Panc1 (cell line): ENCODE measurements at regions of chr10 and their contacts with region 1.

Region 1: GRCh38 chr10:121559326-121560026 is 38.8 kb downstream of the FGFR2 start:
- DNase-seq: no peak
- ATAC-seq: peak; percentile 48; the same call in 1 of the 2 replicates
- H3K4me3 ChIP-seq: no peak overlapping the region
- H3K27ac ChIP-seq: no peak overlapping the region
- H3K4me1 ChIP-seq: no peaks in the 10 kb centered on the region; the same call in 1 of the 2 replicates
- H3K27me3 ChIP-seq: no peaks in the 10 kb centered on the region
- CTCF ChIP-seq: no peak

Region 2: GRCh38 chr10:121033366-121033765 is 526.1 kb before region 1 on chr10:
- CTCF ChIA-PET with region 1: no interaction called
- POLR2A ChIA-PET with region 1: interaction called, 17 read pairs
- in situ Hi-C with region 1: no loop called
- intact Hi-C with region 1: no loop called
- DNase-seq: no peak
- ATAC-seq: no peak
- H3K4me3 ChIP-seq: no peak overlapping the region
- H3K27ac ChIP-seq: no peak overlapping the region
- H3K4me1 ChIP-seq: no peaks in the 10 kb centered on the region
- H3K27me3 ChIP-seq: peaks cover 5% of the 10 kb centered on the region; the same call in 1 of the 2 replicates
- CTCF ChIP-seq: no peak

Region 3: GRCh38 chr10:121490871-121491519 is 68.5 kb before region 1 on chr10:
- CTCF ChIA-PET with region 1: no interaction called
- POLR2A ChIA-PET with region 1: no interaction called
- in situ Hi-C with region 1: no loop called
- intact Hi-C with region 1: no loop called
- DNase-seq: no peak
- ATAC-seq: peak; percentile 38; the same call in 1 of the 2 replicates
- H3K4me3 ChIP-seq: no peak overlapping the region
- H3K27ac ChIP-seq: no peak overlapping the region
- H3K4me1 ChIP-seq: 0 out of 2 replicates have a peak, but pooled peaks cover under 1% of the 10 kb centered on the region
- H3K27me3 ChIP-seq: no peaks in the 10 kb centered on the region
- CTCF ChIP-seq: no peak

Region 4: DNA sequence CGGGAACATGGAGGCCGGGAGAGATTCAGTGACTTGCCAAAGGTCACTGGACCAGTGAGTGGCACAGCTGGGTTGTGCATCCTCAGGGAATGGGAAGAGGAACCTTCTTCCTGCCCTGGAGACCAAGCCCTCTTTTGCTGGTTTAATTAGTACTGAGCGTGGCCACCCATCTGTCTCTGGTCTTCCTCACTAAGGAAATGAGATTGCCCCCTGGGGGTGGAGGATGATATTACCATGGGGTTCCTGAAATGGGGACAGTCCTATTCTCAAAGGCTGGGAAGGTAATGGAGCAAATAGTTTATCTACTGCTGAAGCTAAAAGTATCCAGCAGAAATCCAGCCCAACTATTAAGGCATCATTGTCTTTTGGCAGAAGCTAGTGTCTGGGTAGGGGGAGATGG is 137.4 kb after region 1 on chr10:
- CTCF ChIA-PET with region 1: no interaction called
- POLR2A ChIA-PET with region 1: no interaction called
- in situ Hi-C with region 1: no loop called
- intact Hi-C with region 1: no loop called
- DNase-seq: no peak
- ATAC-seq: no peak
- H3K4me3 ChIP-seq: no peak overlapping the region
- H3K27ac ChIP-seq: no peak overlapping the region
- H3K4me1 ChIP-seq: no peaks in the 10 kb centered on the region
- H3K27me3 ChIP-seq: peaks cover 16% of the 10 kb centered on the region
- CTCF ChIP-seq: peak; percentile 71

Region 5: DNA sequence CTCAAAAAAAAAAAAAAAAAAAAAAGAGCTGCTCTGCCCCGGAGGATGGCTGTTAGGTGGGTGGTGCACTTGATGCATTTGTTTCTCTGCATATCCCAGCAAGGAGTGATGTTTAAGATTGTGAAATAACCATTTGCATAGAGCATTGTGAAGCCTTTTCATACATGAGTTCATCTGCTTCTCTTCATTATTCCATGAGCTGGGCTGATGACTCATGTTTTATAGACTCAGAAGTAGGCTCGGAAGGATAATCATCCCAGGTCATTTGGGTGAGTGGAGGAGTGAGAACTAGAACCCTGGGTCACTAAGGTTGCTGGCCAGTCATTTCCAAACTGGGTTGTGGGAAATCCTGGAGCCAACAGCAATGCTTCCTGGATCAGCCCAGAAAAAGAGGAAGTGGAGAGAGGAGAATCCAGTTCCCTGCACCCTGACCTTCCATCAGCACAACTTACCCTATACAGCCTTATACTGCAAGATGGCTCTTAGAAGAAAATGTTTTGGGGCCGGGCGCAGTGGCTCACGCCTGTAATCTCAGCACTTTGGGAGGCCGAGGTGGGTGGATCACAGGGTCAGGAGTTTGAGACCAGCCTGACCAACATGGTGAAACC is 474.8 kb after region 1 on chr10:
- CTCF ChIA-PET with region 1: no interaction called
- POLR2A ChIA-PET with region 1: interaction called, 12 read pairs
- in situ Hi-C with region 1: no loop called
- intact Hi-C with region 1: no loop called
- DNase-seq: no peak
- ATAC-seq: peak; percentile 44; the same call in 1 of the 2 replicates
- H3K4me3 ChIP-seq: no peak overlapping the region
- H3K27ac ChIP-seq: no peak overlapping the region
- H3K4me1 ChIP-seq: peaks cover 21% of the 10 kb centered on the region
- H3K27me3 ChIP-seq: no peaks in the 10 kb centered on the region
- CTCF ChIP-seq: no peak